Head of caudate nucleus (tissue), 42 donors: ENCODE measurements at regions of chr5 and their contacts with region 1.

Region 1: DNA sequence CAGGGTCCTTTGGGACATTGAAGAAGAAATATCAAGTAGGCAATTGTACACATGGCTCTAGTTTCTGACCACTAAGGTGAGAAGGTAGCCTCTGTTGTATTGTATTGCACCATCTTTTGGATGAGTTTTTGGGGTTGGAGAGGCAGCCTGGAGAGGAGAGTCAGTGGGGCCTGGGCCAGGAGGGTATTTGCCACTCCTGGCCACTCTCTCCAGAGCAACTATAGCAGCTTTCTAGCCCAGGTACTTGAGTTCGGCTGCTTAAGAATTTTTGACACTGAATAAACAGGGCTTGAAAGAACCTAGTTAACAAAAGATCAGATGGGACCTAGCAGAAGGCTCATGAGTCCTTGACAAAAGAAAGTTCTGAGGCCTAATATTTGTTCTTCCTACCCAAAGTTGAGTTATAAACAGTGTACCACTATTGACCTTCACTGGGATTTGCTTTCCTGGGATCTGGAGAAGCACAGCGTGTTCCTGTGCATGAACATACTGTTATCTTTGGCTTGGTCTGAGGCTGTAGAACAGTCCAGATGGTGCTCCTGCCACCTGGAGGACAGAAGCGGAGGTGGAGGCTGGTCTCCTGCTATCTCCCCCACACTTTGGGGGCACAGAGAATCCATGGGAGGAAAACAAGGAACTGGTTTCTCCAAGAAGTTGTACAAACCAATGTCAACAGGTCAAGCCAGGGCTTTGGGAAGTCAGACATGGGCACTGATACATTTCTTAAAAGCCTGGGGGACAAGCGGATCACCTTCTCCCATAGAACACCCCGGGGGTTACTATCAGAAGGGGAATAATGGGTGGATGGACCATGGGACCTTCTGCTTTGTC is 110.4 kb upstream of the LIFR start:
- DNase-seq: peak in 1 of 42 donors; percentile 54

Region 2: GRCh38 chr5:38556599-38557305 is 110.1 kb before region 1 on chr5 and contains the start of gene LIFR:
- intact Hi-C with region 1: loop called (anchors 10 kb)
- DNase-seq: peak; percentile 64 to 95 (median 88)

Region 3: DNA sequence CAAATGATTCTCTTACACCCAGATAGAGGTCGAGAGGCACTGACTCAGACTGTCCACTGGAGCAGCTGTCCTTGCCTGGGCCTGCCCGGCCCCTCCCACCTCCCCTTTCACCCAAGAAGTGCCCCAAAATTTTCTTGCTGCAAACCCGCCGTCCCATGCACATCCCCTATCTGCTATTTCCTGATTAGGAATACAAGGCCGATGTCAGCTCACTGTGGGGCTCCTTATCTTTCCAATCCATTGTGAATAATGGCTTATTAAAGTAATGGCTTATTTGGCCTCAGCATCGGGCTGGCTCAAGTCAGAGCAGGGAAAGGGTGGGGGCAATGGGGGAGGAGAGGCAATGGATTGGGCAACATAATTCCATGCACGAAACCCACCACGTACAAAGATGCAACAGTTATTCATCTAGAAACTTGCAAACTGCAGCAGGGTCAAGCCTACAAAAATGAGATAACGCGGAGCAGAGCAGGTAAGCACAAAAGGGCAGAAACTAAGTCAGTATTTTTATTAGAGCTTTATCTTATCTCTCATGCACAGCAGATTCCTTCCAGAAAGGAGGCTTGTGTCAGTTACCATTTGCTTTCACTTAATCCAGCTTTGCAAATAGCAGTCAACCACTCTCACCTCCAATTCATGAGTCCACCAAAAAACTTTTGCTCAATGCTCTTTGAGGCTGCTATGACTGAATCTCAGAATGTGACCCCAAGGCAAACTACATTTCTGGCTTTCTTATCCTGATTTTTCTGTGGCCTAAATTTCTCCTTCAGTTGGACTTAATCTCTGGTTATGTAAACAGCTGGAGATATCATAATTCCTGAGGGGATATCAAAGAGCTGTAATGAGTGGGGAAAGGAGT is 40.7 kb after region 1 on chr5:
- intact Hi-C with region 1: no loop called
- DNase-seq: no peak